ENCODE measurements at regions of chrX and their contacts with region 1.

Region 1: GRCh38 chrX:87664381-87664780 is 146.8 kb downstream of the KLHL4 start:
- DNase-seq: no peak
- ATAC-seq: no peak
- H3K4me3 ChIP-seq: no peak overlapping the region
- H3K27ac ChIP-seq: no peak overlapping the region
- H3K4me1 ChIP-seq: no peaks in the 10 kb centered on the region
- H3K27me3 ChIP-seq: peaks cover 0 to 5% (median 0%) of the 10 kb centered on the region in 9 donors
- CTCF ChIP-seq: peak; percentile 31 to 62 (median 42)
- POLR2A ChIP-seq: no peak

Region 2: GRCh38 chrX:87338510-87338909 is 325.9 kb before region 1 on chrX:
- intact Hi-C with region 1: loop called in 9 of 10 experiments (anchors 2 to 10 kb)
- DNase-seq: no peak
- ATAC-seq: no peak
- H3K4me3 ChIP-seq: no peak overlapping the region
- H3K27ac ChIP-seq: no peak overlapping the region
- H3K4me1 ChIP-seq: no peaks in the 10 kb centered on the region
- H3K27me3 ChIP-seq: peaks cover 0 to 4% (median 0%) of the 10 kb centered on the region in 9 donors
- CTCF ChIP-seq: peak in 11 of 12 donors; percentile 6 to 56 (median 31)
- POLR2A ChIP-seq: no peak

Region 3: DNA sequence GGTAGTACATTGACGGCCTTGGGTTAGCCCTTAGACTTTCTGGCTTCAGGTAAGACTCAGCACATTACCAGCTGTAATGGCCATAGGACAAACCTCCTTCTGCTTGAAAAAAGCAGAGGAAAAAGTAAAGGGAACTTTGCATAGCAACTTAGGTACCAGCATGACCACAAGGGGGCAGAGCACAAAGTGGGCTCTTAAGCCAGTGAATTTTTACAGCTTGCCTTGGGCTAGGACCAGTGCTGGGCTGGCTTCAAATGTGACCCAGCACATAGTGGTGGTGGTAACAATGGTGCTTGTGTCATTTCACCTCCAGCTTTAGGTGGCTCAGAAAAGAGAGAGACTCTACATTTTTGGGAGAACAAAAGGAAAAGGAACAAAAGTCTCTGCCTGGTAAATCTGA is 80.7 kb before region 1 on chrX:
- intact Hi-C with region 1: loop called in 3 of 10 experiments (anchors 5 to 10 kb)
- DNase-seq: no peak
- ATAC-seq: no peak
- H3K4me3 ChIP-seq: no peak overlapping the region
- H3K27ac ChIP-seq: no peak overlapping the region
- H3K4me1 ChIP-seq: no peaks in the 10 kb centered on the region
- H3K27me3 ChIP-seq: peaks cover 0 to 5% (median 0%) of the 10 kb centered on the region in 9 donors
- CTCF ChIP-seq: peak in 10 of 12 donors; percentile 13 to 50 (median 23)
- POLR2A ChIP-seq: no peak

Measured in heart left ventricle (tissue), 16 donors.